Posterior cingulate gyrus (tissue), 11 donors: ENCODE measurements at regions of chr3 and their contacts with region 1.

Region 1: GRCh38 chr3:132029182-132029902 is 5.5 kb downstream of the CPNE4 start:
- DNase-seq: peak; percentile 71 to 97 (median 86)

Region 2: GRCh38 chr3:131033480-131034080 is 995.8 kb before region 1 on chr3:
- intact Hi-C with region 1: loop called (anchors 5 kb)
- DNase-seq: no peak

Region 3: GRCh38 chr3:131053043-131053859 is 976.1 kb before region 1 on chr3:
- intact Hi-C with region 1: loop called (anchors 5 kb)
- DNase-seq: no peak

Region 4: DNA sequence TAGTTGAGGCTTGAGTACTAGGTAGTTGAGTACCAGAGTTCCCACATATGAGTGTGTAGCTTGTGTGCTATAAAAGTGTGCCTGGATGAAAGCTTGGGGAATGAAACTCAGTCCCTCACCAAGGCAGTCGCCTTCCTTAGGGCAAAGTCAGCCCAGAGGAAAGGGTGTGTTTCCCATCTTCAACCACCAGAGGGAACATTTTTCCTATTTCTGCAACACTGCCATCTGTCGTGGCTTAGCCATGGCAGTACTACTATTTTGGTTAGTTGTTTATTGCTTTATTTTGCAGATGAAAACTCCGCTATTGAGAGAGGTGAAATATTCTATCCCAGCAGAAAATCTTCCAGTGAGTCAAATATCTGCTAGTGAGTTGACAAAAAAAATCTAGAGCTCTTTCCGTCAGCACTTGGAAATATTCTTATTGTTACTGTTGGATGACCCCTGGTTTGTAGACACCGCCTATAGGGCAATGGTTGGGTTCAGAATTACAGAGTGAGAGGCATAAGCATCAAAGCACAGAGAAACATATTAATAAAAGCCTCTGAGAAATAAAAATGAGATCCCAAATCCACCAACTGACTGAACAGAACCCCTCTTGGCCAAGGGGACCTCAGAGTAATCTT is 234.5 kb before region 1 on chr3:
- intact Hi-C with region 1: loop called (anchors 1 kb)
- DNase-seq: peak in 3 of 10 donors; percentile 9 to 38 (median 16)

Region 5: DNA sequence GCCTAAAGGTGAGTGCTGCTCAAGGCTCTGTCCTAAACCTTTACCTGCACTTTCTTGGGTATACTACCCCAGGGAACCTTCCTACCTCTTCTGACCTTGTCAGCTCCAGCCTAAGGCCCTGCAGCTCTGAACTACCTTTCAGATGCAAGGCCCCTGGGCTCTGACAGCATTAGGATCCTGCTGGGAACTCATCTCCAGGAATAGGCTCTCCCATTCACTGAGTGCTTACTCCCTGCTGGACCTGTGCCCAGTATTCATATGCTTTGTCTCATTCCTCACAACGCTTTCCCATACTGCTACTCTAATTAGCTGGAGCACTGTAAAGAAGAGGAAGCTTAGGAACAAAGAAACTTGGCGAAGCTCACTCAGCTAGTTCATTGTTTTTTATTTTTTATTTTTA is 1920.1 kb after region 1 on chr3:
- intact Hi-C with region 1: no loop called
- DNase-seq: peak in 3 of 10 donors; percentile 2 to 37 (median 27)